Endothelial cell of umbilical vein (primary cell): ENCODE measurements at regions of chr20 and their contacts with region 1.

Region 1: DNA sequence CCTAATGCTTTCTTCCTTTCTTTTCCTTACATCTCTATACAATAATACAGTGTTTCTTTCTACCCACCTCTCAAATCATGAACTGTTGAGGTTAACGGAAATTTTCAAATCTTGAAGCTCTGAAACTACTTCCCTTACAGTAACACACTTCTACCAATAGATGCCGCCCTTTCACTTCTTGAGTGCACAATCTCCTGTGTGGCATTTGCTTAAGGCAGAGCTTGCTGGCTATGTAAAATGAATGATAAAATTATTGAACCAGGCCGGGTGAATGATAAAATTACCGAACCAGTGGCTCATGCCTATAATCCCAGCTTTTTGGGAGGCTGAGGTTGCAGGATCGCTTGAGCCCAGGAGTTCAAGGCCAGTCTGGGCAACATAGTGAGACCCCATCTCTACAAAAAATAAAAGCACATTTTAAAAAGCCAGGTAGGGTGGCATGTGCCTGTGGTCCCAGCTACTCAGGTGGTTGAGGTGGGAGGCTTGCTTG is 56.8 kb downstream of the KCNS1 start:
- DNase-seq: peak; percentile 82
- H3K4me3 ChIP-seq: no peak overlapping the region
- H3K27ac ChIP-seq: no peak overlapping the region
- H3K4me1 ChIP-seq: peaks cover 19% of the 10 kb centered on the region
- H3K27me3 ChIP-seq: no peaks in the 10 kb centered on the region
- CTCF ChIP-seq: peak; percentile 72 to 77
- POLR2A ChIP-seq: no peak

Region 2: GRCh38 chr20:44858606-44859360 is 185.3 kb before region 1 on chr20:
- CTCF ChIA-PET with region 1: no interaction called
- POLR2A ChIA-PET with region 1: no interaction called
- dilution Hi-C with region 1: no loop called
- intact Hi-C with region 1: no loop called
- DNase-seq: no peak
- H3K4me3 ChIP-seq: no peak overlapping the region
- H3K27ac ChIP-seq: no peak overlapping the region
- H3K4me1 ChIP-seq: no peaks in the 10 kb centered on the region
- H3K27me3 ChIP-seq: no peaks in the 10 kb centered on the region
- CTCF ChIP-seq: no peak
- POLR2A ChIP-seq: no peak

Region 3: GRCh38 chr20:44960103-44960852 is 83.9 kb before region 1 on chr20 and contains the start of gene TOMM34:
- CTCF ChIA-PET with region 1: interaction called, 11 read pairs
- POLR2A ChIA-PET with region 1: no interaction called
- dilution Hi-C with region 1: no loop called
- intact Hi-C with region 1: no loop called
- DNase-seq: peak; percentile 90
- H3K4me3 ChIP-seq: peak within 1 kb of the TSS; percentile 90 to 96 (median 95)
- H3K27ac ChIP-seq: peak within 1 kb of the TSS; percentile 68
- H3K4me1 ChIP-seq: peaks cover 28% of the 10 kb centered on the region
- H3K27me3 ChIP-seq: no peaks in the 10 kb centered on the region
- CTCF ChIP-seq: no peak
- POLR2A ChIP-seq: peak; percentile 85
- total RNA-seq, gene TOMM34: 37.0 and 44.2 TPM in 2 replicates

Region 4: GRCh38 chr20:45011108-45011526 is 33.0 kb before region 1 on chr20:
- CTCF ChIA-PET with region 1: interaction called, 49 read pairs
- POLR2A ChIA-PET with region 1: no interaction called
- dilution Hi-C with region 1: no loop called
- intact Hi-C with region 1: loop called (anchors 2 kb)
- DNase-seq: peak; percentile 74
- H3K4me3 ChIP-seq: no peak overlapping the region
- H3K27ac ChIP-seq: no peak overlapping the region
- H3K4me1 ChIP-seq: no peaks in the 10 kb centered on the region
- H3K27me3 ChIP-seq: no peaks in the 10 kb centered on the region
- CTCF ChIP-seq: peak; percentile 67 to 68
- POLR2A ChIP-seq: no peak

Region 5: GRCh38 chr20:45070932-45071632 is 27.0 kb after region 1 on chr20:
- CTCF ChIA-PET with region 1: interaction called, 40 read pairs
- POLR2A ChIA-PET with region 1: no interaction called
- dilution Hi-C with region 1: no loop called
- intact Hi-C with region 1: no loop called
- DNase-seq: peak; percentile 94
- H3K4me3 ChIP-seq: no peak overlapping the region
- H3K27ac ChIP-seq: peak overlapping the region; percentile 15
- H3K4me1 ChIP-seq: peaks cover 8% of the 10 kb centered on the region
- H3K27me3 ChIP-seq: no peaks in the 10 kb centered on the region
- CTCF ChIP-seq: no peak
- POLR2A ChIP-seq: no peak

Region 6: GRCh38 chr20:45095753-45096371 is 51.7 kb after region 1 on chr20:
- CTCF ChIA-PET with region 1: interaction called, 411 read pairs
- POLR2A ChIA-PET with region 1: no interaction called
- dilution Hi-C with region 1: no loop called
- intact Hi-C with region 1: loop called (anchors 1 kb)
- DNase-seq: peak; percentile 52
- H3K4me3 ChIP-seq: no peak overlapping the region
- H3K27ac ChIP-seq: no peak overlapping the region
- H3K4me1 ChIP-seq: peaks cover under 1% of the 10 kb centered on the region
- H3K27me3 ChIP-seq: peaks cover 23 to 30% of the 10 kb centered on the region in 2 experiments
- CTCF ChIP-seq: peak; percentile 53 to 79
- POLR2A ChIP-seq: no peak

Region 7: GRCh38 chr20:45138561-45139300 is 94.6 kb after region 1 on chr20:
- CTCF ChIA-PET with region 1: interaction called, 12 read pairs
- POLR2A ChIA-PET with region 1: no interaction called
- dilution Hi-C with region 1: no loop called
- intact Hi-C with region 1: no loop called
- DNase-seq: peak; percentile 4
- H3K4me3 ChIP-seq: no peak overlapping the region
- H3K27ac ChIP-seq: no peak overlapping the region
- H3K4me1 ChIP-seq: no peaks in the 10 kb centered on the region
- H3K27me3 ChIP-seq: peaks cover 11 to 12% of the 10 kb centered on the region in 2 experiments
- CTCF ChIP-seq: peak; percentile 69 to 70
- POLR2A ChIP-seq: no peak

Region 8: GRCh38 chr20:45293041-45294002 is 249.2 kb after region 1 on chr20:
- CTCF ChIA-PET with region 1: interaction called, 169 read pairs
- POLR2A ChIA-PET with region 1: no interaction called
- dilution Hi-C with region 1: no loop called
- intact Hi-C with region 1: loop called (anchors 1 kb)
- DNase-seq: peak; percentile 76
- H3K4me3 ChIP-seq: peak overlapping the region; percentile 33 to 51 (median 47)
- H3K27ac ChIP-seq: peak overlapping the region; percentile 37
- H3K4me1 ChIP-seq: peaks cover 9% of the 10 kb centered on the region
- H3K27me3 ChIP-seq: peaks cover 0 to 8% of the 10 kb centered on the region in 2 experiments
- CTCF ChIP-seq: peak; percentile 95 to 99
- POLR2A ChIP-seq: no peak

Region 9: DNA sequence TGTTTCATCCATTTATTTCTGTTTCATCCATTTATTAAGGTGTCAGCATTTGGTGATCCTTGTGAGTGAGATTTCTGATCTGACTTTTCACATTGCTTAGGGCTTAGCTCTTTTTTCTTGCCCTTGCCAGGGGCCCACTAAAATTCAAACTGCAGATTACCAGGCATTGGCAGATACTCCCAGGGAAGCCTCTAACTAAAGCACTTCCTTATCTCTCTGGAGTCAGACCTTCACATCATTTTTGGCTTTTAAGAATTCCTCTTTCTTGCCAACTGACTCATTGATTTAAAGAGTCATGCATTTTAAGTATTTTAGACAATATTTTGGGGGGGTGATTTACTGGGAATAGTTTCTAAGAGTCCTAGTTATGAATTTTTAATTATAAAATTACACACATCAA is 537.6 kb after region 1 on chr20:
- CTCF ChIA-PET with region 1: no interaction called
- POLR2A ChIA-PET with region 1: no interaction called
- dilution Hi-C with region 1: no loop called
- intact Hi-C with region 1: no loop called
- DNase-seq: no peak
- H3K4me3 ChIP-seq: no peak overlapping the region
- H3K27ac ChIP-seq: no peak overlapping the region
- H3K4me1 ChIP-seq: no peaks in the 10 kb centered on the region
- H3K27me3 ChIP-seq: peaks cover 0 to 12% of the 10 kb centered on the region in 2 experiments
- CTCF ChIP-seq: no peak
- POLR2A ChIP-seq: no peak